ENCODE measurements at regions of chr15 and their contacts with region 1.

Region 1: DNA sequence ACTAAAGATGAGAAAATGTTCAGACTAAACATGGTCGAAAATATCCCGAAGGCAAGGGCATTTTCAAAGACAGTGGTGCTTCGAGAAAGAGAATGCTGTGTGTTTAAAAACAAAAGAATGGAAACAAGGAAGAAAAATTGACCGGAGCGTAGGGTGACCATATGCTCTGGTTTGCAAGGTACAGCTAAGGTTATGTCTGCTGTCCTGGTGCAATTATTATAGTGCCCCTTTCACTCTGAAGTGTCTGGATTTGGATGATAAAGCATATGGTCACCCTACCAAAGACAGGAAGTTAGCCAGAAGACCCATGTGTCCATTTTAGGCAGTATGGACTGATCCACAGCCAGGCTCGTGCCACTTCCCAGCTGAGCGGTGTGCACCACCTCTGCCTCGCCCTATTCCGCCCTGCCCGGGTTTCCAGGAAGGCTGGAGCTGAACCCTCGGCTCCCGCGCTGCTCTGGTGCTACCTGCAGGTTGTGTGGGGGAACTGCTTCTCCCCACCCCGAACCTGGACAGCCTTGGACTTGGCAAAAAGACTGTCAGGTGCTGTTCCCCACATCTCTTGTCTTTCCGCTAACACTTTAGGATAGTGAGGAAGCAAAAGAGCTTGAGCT is 25.2 kb downstream of the GOLGA6D start:
- DNase-seq: no peak
- ATAC-seq: peak; percentile 91
- H3K4me3 ChIP-seq: no peak overlapping the region
- H3K27ac ChIP-seq: no peak overlapping the region
- H3K4me1 ChIP-seq: no peaks in the 10 kb centered on the region
- H3K27me3 ChIP-seq: no peaks in the 10 kb centered on the region
- CTCF ChIP-seq: peak; percentile 44 to 64 (median 53); a peak in 5 of 6 replicates
- EP300 ChIP-seq: no peak
- POLR2A ChIP-seq: no peak
- RAD21 ChIP-seq: peak; percentile 55

Region 2: GRCh38 chr15:74062671-74063070 is 1245.2 kb before region 1 on chr15:
- CTCF ChIA-PET with region 1: no interaction called
- POLR2A ChIA-PET with region 1: no interaction called
- RAD21 ChIA-PET with region 1: no interaction called
- SMC1A ChIA-PET with region 1: no interaction called
- in situ Hi-C with region 1: loop called (anchors 10 kb)
- intact Hi-C with region 1: no loop called
- DNase-seq: no peak
- ATAC-seq: no peak
- H3K4me3 ChIP-seq: no peak overlapping the region
- H3K27ac ChIP-seq: no peak overlapping the region
- H3K4me1 ChIP-seq: no peaks in the 10 kb centered on the region
- H3K27me3 ChIP-seq: no peaks in the 10 kb centered on the region; a peak in 3 of 4 replicates
- CTCF ChIP-seq: no peak
- EP300 ChIP-seq: no peak
- POLR2A ChIP-seq: no peak
- RAD21 ChIP-seq: no peak

Region 3: DNA sequence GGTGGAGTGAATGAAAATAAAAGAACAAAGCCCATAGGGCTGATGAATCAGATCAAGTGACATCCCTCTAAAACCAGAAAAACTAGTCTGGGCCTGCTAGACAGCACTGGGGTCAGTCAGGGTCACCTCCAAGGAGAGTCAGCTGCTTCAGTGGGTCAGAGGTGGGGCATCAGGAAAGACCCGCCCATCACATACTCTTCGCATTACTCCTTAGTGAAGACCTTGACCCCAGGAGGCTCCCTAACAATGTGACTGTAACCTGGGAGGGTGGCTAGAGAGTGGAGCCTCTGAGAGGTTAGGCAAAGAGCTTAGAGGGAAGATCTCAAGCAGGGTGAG is 271.6 kb before region 1 on chr15:
- CTCF ChIA-PET with region 1: no interaction called
- POLR2A ChIA-PET with region 1: no interaction called
- RAD21 ChIA-PET with region 1: no interaction called
- SMC1A ChIA-PET with region 1: no interaction called
- in situ Hi-C with region 1: no loop called
- intact Hi-C with region 1: no loop called
- DNase-seq: no peak
- ATAC-seq: no peak
- H3K4me3 ChIP-seq: no peak overlapping the region
- H3K27ac ChIP-seq: no peak overlapping the region
- H3K4me1 ChIP-seq: peaks cover 24% of the 10 kb centered on the region
- H3K27me3 ChIP-seq: no peaks in the 10 kb centered on the region
- CTCF ChIP-seq: no peak
- EP300 ChIP-seq: no peak
- POLR2A ChIP-seq: no peak
- RAD21 ChIP-seq: no peak